ENCODE measurements at regions of chr20 and their contacts with region 1.

Region 1: DNA sequence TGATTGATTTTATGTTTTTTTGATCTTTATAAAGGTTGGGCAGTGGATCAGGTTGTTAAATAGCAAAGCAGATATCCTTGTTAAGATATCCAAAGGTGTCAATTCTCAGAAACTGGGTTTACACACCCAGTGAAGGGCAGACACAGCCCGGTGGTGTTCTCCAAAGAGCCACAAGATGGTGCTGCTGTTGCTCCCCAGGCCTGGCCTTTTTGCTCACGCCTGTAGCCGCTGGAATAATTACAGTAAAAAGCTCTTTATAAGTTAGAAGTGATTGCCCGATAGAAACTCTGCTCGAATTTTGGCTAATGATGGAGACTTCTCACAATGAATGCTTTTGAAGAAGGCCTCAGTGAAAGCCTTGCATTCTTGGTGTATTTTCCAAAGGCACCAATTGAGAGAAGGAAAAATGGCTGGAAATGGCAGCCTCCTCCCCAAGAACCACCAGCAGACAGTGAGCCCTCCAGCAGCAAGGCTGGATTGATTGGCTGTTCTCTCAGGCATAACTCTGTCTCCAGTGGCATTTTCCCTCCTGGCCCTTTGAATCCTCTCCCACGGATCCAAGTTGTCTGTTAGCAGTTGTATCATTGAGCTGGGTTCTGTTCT is 120.5 kb upstream of the CHD6 start:
- DNase-seq: peak in 2 of 3 donors; percentile 36 to 62
- ATAC-seq: peak; percentile 64 to 81
- H3K4me3 ChIP-seq: no peak overlapping the region
- H3K27ac ChIP-seq: no peak overlapping the region
- H3K4me1 ChIP-seq: no peaks in the 10 kb centered on the region
- H3K27me3 ChIP-seq: no peaks in the 10 kb centered on the region

Region 2: DNA sequence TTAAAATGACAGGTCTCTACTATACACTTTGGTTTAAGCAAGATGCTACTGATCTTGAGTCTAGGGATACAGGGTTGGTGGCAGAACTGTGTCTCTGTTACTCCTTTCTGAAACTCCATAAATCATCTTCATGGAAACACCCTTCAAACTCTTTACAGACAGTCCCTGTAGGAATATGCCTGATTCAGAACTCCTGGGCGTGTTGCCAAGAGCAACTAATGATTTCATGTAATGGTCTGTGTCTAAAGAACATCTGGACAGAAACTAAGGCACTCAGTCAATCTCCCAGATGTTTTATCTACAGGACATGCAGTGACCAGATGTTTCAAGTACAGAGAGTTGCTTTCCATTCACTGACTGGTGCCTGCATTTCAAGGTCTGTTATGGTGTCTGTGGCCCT is 343.9 kb after region 1 on chr20:
- intact Hi-C with region 1: no loop called
- DNase-seq: peak; percentile 51 to 80 (median 72)
- ATAC-seq: peak; percentile 82 to 84
- H3K4me3 ChIP-seq: no peak overlapping the region
- H3K27ac ChIP-seq: no peak overlapping the region
- H3K4me1 ChIP-seq: peaks cover 3% of the 10 kb centered on the region
- H3K27me3 ChIP-seq: no peaks in the 10 kb centered on the region

Region 3: GRCh38 chr20:43187476-43188233 is 1449.0 kb after region 1 on chr20:
- intact Hi-C with region 1: loop called in 3 of 4 experiments (anchors 5 to 10 kb)
- DNase-seq: peak; percentile 65 to 87 (median 87)
- ATAC-seq: peak; percentile 43 to 64
- H3K4me3 ChIP-seq: no peak overlapping the region
- H3K27ac ChIP-seq: no peak overlapping the region
- H3K4me1 ChIP-seq: peaks cover 2% of the 10 kb centered on the region
- H3K27me3 ChIP-seq: no peaks in the 10 kb centered on the region